Panc1 (cell line): ENCODE measurements at regions of chr19 and their contacts with region 1.

Region 1: DNA sequence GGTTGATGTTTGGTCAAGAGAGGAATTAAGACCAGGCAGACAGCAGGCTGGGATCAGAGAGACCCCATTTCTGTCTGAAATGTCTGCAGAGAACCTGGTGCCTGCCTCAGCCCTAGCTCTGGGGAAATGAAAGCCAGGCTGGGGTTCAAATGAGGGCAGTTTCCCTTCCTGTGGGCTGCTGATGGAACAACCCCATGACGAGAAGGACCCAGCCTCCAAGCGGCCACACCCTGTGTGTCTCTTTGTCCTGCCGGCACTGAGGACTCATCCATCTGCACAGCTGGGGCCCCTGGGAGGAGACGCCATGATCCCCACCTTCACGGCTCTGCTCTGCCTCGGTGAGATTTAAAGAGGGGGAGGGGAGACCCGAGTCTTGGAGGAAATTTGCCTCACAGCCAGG is at the start of gene LILRB4:
- DNase-seq: no peak
- ATAC-seq: no peak
- H3K4me3 ChIP-seq: no peak within 1 kb of the TSS
- H3K27ac ChIP-seq: no peak within 1 kb of the TSS
- H3K4me1 ChIP-seq: no peaks in the 10 kb centered on the region
- H3K27me3 ChIP-seq: peaks cover 8% of the 10 kb centered on the region
- CTCF ChIP-seq: no peak
- total RNA-seq, gene LILRB4: not detected

Region 2: GRCh38 chr19:54684527-54684926 is 21.8 kb after region 1 on chr19:
- CTCF ChIA-PET with region 1: interaction called, 10 read pairs
- POLR2A ChIA-PET with region 1: no interaction called
- in situ Hi-C with region 1: no loop called
- intact Hi-C with region 1: no loop called
- DNase-seq: no peak
- ATAC-seq: no peak
- H3K4me3 ChIP-seq: no peak overlapping the region
- H3K27ac ChIP-seq: no peak overlapping the region
- H3K4me1 ChIP-seq: no peaks in the 10 kb centered on the region
- H3K27me3 ChIP-seq: peaks cover 44% of the 10 kb centered on the region
- CTCF ChIP-seq: no peak

Region 3: DNA sequence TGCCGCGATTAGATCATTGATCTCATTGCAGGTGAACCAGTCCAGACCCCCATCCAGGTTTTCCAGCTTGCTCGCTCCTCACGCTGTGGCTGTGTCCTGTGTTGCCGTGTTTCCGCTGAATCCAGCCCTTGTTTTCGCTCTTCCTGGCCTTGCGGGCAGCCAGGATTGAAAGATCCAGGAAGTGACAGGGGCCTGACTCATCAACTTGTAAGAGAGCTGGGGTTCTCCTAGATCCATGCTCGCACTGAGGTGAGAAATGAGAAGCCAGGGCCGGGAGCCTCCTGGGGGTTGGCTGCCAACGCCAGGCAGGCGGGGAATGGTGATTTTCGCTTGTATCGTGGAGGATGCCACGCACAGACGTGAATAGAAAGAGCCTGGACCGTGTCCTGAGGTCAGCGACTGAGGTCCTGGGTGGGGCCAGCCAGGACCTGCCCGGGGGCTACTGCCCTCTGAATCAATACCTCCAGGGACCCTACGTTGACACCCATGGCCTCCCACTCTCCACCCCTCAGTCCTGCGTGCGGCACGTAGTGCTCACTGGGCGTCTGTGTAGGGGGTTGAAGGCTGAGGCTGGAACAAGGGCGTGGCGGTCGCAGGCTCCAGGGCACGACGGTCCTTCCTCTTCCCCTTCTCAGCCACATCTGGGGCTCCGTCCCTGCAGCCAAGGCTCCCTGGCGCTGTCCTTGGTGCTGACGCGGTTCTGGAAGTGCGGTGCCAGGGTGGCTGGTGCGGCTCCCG is 553.9 kb after region 1 on chr19:
- CTCF ChIA-PET with region 1: no interaction called
- POLR2A ChIA-PET with region 1: no interaction called
- in situ Hi-C with region 1: no loop called
- intact Hi-C with region 1: no loop called
- DNase-seq: peak; percentile 99
- ATAC-seq: peak; percentile 94
- H3K4me3 ChIP-seq: peak overlapping the region; percentile 65 to 74
- H3K27ac ChIP-seq: peak overlapping the region; percentile 95
- H3K4me1 ChIP-seq: peaks cover 14% of the 10 kb centered on the region
- H3K27me3 ChIP-seq: no peaks in the 10 kb centered on the region
- CTCF ChIP-seq: no peak